OCI-LY7 (cell line): ENCODE measurements at regions of chr15 and their contacts with region 1.

Region 1: GRCh38 chr15:101781927-101782326 is 21.4 kb upstream of the OR4F6 start:
- DNase-seq: peak; percentile 3
- H3K4me3 ChIP-seq: no peak overlapping the region
- H3K27ac ChIP-seq: no peak overlapping the region
- H3K4me1 ChIP-seq: no peaks in the 10 kb centered on the region
- CTCF ChIP-seq: no peak

Region 2: DNA sequence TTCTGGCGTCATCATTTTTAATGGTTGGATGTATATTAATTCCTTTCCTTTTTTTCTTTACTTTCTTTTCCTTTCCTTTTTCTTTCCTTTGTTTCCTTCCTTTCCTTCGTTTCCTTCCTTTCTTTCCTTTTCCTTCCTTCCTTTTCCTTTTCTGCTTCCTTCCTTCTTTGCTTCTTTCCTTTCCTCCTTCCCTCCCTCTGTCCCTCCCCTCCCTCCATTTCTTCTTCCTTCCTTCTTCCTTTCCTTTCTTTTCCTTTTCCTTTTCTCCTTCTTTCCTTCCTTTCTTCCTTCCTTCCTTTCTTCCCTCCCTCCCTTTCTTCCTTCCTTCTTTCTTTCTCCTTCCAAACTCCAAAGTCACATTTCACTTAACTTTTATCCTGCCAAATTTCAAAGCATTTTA is 1993.7 kb before region 1 on chr15:
- CTCF ChIA-PET with region 1: no interaction called
- POLR2A ChIA-PET with region 1: no interaction called
- intact Hi-C with region 1: loop called (anchors 10 kb)
- DNase-seq: no peak
- H3K4me3 ChIP-seq: no peak overlapping the region
- H3K27ac ChIP-seq: no peak overlapping the region
- H3K4me1 ChIP-seq: no peaks in the 10 kb centered on the region
- CTCF ChIP-seq: no peak